ENCODE measurements at regions of chr1 and their contacts with region 1.

Region 1: GRCh38 chr1:234610348-234611152 is 572 bp upstream of the IRF2BP2 start:
- DNase-seq: peak; percentile 90 to 95 (median 93)
- H3K4me3 ChIP-seq: peak overlapping the region; percentile 50 to 89 (median 71)
- H3K27ac ChIP-seq: peak overlapping the region; percentile 94 to 100 (median 99)
- H3K27me3 ChIP-seq: no peaks in the 10 kb centered on the region
- CTCF ChIP-seq: peak in 12 of 56 donors; percentile 3 to 39 (median 21)

Region 2: GRCh38 chr1:234533975-234534876 is 76.3 kb before region 1 on chr1:
- intact Hi-C with region 1: loop called in 1 of 2 experiments (anchors 5 kb)
- DNase-seq: peak; percentile 46 to 92 (median 82)
- H3K4me3 ChIP-seq: peak overlapping the region in 5 of 59 donors; percentile 3 to 18 (median 8)
- H3K27ac ChIP-seq: peak overlapping the region; percentile 81 to 99 (median 95)
- H3K27me3 ChIP-seq: no peaks in the 10 kb centered on the region
- CTCF ChIP-seq: peak in 4 of 56 donors; percentile 5 to 13 (median 8)

Region 3: DNA sequence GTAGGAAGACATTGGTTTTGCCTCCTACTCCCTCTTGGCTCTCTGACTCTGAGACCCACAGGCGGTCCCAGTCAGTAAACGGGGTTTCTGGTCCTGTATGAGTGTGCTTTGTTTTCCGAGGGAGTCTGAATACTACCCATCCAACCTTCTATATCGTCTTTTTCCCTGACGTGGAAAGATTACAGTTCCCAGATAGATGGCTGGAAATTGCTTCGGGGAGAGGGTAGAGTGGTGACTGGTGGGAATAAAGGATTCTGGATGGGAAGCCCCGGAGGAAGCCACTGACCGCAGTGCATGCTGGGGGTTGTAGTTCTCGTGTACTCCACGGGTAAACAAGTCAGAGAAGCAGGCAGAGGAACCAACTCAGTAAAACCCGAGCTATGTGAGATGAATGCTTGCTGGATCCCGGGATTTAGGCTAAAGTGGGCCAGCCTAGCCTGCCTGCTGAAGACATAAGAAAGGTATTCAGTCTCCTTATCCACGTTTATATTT is 65.6 kb after region 1 on chr1:
- intact Hi-C with region 1: loop called (anchors 2 to 5 kb)
- DNase-seq: peak; percentile 84 to 97 (median 92)
- H3K4me3 ChIP-seq: peak overlapping the region; percentile 17 to 74 (median 56)
- H3K27ac ChIP-seq: peak overlapping the region; percentile 35 to 96 (median 87)
- H3K27me3 ChIP-seq: no peaks in the 10 kb centered on the region
- CTCF ChIP-seq: peak in 17 of 56 donors; percentile 4 to 32 (median 21)

Region 4: GRCh38 chr1:234978397-234979295 is 368.1 kb after region 1 on chr1:
- intact Hi-C with region 1: loop called (anchors 5 kb)
- DNase-seq: peak in 9 of 10 donors; percentile 73 to 88 (median 78)
- H3K4me3 ChIP-seq: peak overlapping the region in 20 of 59 donors; percentile 2 to 42 (median 11)
- H3K27ac ChIP-seq: peak overlapping the region; percentile 80 to 98 (median 94)
- H3K27me3 ChIP-seq: no peaks in the 10 kb centered on the region
- CTCF ChIP-seq: peak in 28 of 56 donors; percentile 5 to 57 (median 26)

Region 5: DNA sequence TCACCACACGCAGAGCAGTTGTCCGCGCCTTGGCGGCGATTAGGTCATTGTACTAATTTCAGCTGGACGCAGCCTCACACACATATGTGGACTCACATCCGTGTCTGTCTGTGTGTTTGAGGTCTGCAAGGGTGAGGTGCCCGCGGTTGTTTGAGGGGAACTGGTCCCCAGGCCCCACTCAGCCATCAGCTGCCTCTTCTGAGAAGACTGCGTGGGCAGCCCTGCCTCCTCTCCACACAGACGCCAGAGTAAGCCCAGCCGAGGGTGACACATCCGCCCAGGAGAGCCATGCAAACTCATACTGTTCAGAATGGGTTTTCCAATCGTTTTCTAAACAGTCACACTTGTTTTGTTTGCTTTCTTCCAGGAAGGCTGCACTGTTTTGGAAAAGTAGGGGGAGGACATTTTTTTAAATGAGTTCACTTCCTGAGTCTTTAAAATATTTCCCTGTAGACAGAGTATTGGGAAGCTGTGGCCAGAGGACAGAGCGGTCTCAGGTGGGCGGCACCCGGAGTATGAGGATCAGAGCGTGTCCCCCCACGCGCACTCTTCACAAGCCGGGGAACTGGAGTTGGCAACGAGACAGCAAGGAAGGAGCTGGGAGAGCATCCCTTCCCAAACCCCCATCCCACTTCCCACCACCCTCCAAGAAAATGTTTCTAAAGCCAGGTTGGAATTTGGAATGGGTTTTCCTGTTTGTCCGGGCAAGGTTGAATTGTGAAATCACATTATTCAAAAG is 464.8 kb after region 1 on chr1:
- intact Hi-C with region 1: loop called in 1 of 2 experiments (anchors 2 kb)
- DNase-seq: peak in 8 of 10 donors; percentile 52 to 89 (median 77)
- H3K4me3 ChIP-seq: peak overlapping the region in 43 of 59 donors; percentile 1 to 51 (median 23)
- H3K27ac ChIP-seq: peak overlapping the region; percentile 34 to 95 (median 87)
- H3K27me3 ChIP-seq: no peaks in the 10 kb centered on the region
- CTCF ChIP-seq: no peak

Measured in dorsolateral prefrontal cortex (tissue), 120 donors.